HCT116 (cell line): ENCODE measurements at regions of chr9 and their contacts with region 1.

Region 1: DNA sequence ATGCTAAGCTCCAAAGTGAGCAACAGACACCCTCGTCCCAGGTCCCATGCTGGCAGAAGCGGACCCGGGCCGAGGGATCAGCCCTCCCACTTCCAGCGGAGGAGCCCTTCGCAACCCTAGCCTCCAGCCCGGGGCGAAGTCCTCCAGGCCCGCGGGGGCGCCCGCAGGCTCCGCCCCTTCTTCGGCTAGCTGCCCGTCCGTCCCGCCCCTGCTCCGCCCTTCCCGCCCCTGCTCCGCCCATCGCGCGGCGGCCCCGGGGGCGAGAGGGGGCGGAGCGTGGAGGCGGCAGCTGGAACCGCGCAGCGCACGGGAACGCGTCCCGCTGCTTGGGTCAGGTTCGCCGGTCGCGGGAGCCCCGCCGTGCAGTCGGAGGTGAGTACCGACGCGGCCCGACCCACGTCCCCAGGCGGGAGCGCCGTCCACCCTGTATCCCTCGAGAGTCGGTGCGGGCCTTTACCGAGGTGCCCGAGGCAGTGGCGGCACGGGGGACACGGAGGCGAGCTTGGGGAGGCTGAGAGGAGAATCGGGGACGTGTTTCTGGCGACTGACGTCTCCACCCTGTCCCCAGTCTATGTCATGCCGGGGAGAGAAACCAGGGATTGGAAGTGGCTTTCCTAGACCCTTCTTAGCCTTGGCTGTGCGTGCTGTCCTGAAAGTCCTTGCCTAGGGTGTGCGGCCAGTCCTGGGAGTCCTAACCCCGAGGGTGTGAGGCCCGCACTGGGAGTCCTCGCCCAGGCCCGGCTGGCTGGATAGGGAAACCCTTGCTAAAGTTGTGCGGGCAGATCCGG is at the start of gene ACO1:
- DNase-seq: peak; percentile 56
- ATAC-seq: peak; percentile 92
- H3K4me3 ChIP-seq: peak within 1 kb of the TSS; percentile 71 to 85
- H3K27ac ChIP-seq: peak within 1 kb of the TSS; percentile 48
- H3K4me1 ChIP-seq: peaks cover 3 to 8% of the 10 kb centered on the region in 2 experiments; a peak in 3 of 4 replicates
- H3K27me3 ChIP-seq: no peaks in the 10 kb centered on the region
- CTCF ChIP-seq: no peak
- POLR2A ChIP-seq: peak; percentile 13
- RAD21 ChIP-seq: no peak
- total RNA-seq, gene ACO1: 36.2 TPM

Region 2: GRCh38 chr9:32423371-32423770 is 38.8 kb after region 1 on chr9:
- CTCF ChIA-PET with region 1: interaction called, 3 read pairs
- POLR2A ChIA-PET with region 1: no interaction called
- RAD21 ChIA-PET with region 1: no interaction called
- intact Hi-C with region 1: loop called (anchors 1 kb)
- DNase-seq: no peak
- ATAC-seq: no peak
- H3K4me3 ChIP-seq: no peak overlapping the region
- H3K27ac ChIP-seq: no peak overlapping the region
- H3K4me1 ChIP-seq: no peaks in the 10 kb centered on the region
- H3K27me3 ChIP-seq: no peaks in the 10 kb centered on the region
- CTCF ChIP-seq: no peak
- POLR2A ChIP-seq: no peak
- RAD21 ChIP-seq: no peak

Region 3: GRCh38 chr9:32526041-32526706 is 141.6 kb after region 1 on chr9 and contains the start of gene RIGI:
- CTCF ChIA-PET with region 1: interaction called, 62 read pairs
- POLR2A ChIA-PET with region 1: interaction called, 3 read pairs
- RAD21 ChIA-PET with region 1: interaction called, 6 to 8 read pairs
- intact Hi-C with region 1: loop called (anchors 1 kb)
- DNase-seq: peak; percentile 85
- ATAC-seq: peak; percentile 86
- H3K4me3 ChIP-seq: peak within 1 kb of the TSS; percentile 76 to 81
- H3K27ac ChIP-seq: peak within 1 kb of the TSS; percentile 76
- H3K4me1 ChIP-seq: peaks cover 11 to 22% of the 10 kb centered on the region in 2 experiments; a peak in 3 of 4 replicates
- H3K27me3 ChIP-seq: no peaks in the 10 kb centered on the region
- CTCF ChIP-seq: peak; percentile 49 to 59 (median 50); a peak in 5 of 6 replicates
- POLR2A ChIP-seq: no peak
- RAD21 ChIP-seq: peak; percentile 73
- total RNA-seq, gene RIGI: 5.5 TPM